Heart right ventricle (tissue), 16 donors: ENCODE measurements at regions of chr11 and their contacts with region 1.

Region 1: GRCh38 chr11:65418711-65419459 is 3.7 kb upstream of the NEAT1 start:
- DNase-seq: peak; percentile 97 to 99
- ATAC-seq: peak; percentile 44 to 66 (median 57)
- H3K4me3 ChIP-seq: peak overlapping the region; percentile 12 to 95 (median 74)
- H3K27ac ChIP-seq: peak overlapping the region; percentile 99 to 100 (median 100)
- H3K4me1 ChIP-seq: peaks cover 38 to 69% (median 66%) of the 10 kb centered on the region in 9 donors
- H3K27me3 ChIP-seq: no peaks in the 10 kb centered on the region
- CTCF ChIP-seq: no peak

Region 2: DNA sequence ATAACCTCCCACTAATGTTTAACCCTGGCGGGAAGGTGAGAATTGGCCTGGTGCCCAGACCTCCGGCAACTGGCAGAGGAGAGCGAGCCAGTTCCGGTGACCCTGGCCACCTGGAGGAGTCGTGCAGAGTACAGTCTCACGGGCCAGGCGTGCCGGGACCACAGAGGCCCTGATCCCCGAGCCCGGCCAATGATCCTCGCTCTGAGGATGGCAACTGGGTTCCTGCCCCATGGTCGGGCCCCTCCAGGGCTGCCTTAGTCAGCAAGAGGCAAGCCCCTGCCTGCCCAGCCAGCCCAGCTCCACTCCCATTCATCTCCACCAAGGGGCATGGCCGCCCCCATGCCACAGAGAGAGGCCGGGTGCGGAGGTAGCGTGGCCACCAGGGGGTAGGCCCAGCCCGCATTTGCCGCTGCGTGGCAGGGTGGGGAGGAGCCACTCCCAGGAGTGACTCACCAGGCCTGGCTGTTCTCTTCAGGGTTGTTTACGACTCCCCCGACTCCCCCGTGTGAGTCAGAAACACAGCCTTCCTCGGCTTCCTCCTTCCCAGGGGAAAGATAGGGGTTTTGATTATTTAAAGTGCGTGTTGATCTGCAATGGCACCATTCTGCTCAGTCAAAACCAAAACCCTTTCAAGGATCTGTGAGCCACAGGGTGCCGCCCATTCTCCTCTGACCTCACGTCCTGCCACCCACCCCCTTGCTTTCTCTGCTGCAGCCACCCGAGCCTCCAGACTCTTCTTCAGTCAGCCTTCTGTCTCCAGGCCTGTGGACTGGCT is 36.7 kb before region 1 on chr11 and contains the start of gene SLC25A45:
- intact Hi-C with region 1: loop called in 8 of 10 experiments (anchors 2 to 5 kb)
- DNase-seq: peak; percentile 90 to 93
- ATAC-seq: peak; percentile 89 to 96 (median 94)
- H3K4me3 ChIP-seq: peak within 1 kb of the TSS; percentile 27 to 74 (median 56)
- H3K27ac ChIP-seq: peak within 1 kb of the TSS; percentile 94 to 99 (median 98)
- H3K4me1 ChIP-seq: peaks cover 13 to 74% (median 47%) of the 10 kb centered on the region in 9 donors
- H3K27me3 ChIP-seq: no peaks in the 10 kb centered on the region
- CTCF ChIP-seq: peak; percentile 79 to 98 (median 86)
- total RNA-seq, gene SLC25A45: 4.6 to 12.2 (median 8.3) TPM

Region 3: GRCh38 chr11:65454696-65455456 is 36.0 kb after region 1 on chr11:
- intact Hi-C with region 1: loop called in 1 of 10 experiments (anchors 10 kb)
- DNase-seq: peak; percentile 89 to 93
- ATAC-seq: peak; percentile 91 to 98 (median 97)
- H3K4me3 ChIP-seq: peak overlapping the region; percentile 12 to 65 (median 50)
- H3K27ac ChIP-seq: peak overlapping the region; percentile 67 to 91 (median 85)
- H3K4me1 ChIP-seq: peaks cover 4 to 49% (median 24%) of the 10 kb centered on the region in 9 donors
- H3K27me3 ChIP-seq: no peaks in the 10 kb centered on the region
- CTCF ChIP-seq: peak in 3 of 9 donors; percentile 22 to 39 (median 27)

Region 4: DNA sequence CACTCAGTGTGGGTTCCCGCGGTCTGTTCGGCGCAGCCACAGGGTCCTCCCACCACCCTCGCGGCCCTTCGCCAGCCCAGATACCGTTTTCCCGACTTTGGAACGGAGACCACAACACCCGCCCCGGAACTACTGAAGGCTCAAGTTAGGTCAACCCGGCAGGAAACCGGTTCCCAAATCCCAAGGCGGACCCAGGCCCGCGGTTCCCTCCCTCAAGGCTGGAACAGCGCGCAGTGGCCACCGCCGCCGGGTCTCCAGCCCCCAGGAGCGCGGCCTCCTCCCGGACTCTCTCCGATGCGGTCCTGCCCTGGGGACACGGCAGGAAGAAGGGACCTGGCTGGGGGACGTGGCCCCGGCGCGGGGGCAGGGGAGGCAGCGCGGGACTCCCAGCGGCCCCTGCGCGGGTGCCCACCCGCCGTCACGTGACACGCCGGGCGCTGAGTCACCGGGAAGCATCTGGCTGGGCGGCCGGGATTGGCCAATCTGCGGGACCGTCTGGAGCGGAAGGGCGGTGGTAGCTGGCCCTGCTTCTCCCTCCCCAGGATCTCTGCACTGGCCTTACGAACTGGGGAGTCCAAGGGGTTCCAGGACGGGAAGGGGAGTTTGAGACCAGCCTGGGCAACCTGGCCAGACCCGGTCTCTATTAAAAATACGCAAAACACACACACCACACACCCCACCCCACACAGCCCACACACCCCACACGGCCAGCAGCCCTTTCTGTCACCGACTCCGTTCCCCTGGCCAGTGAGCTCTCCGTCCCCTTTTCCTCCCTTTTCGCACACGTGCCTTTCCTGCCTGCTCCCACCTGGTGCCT is 58.5 kb after region 1 on chr11:
- intact Hi-C with region 1: loop called in 3 of 10 experiments (anchors 2 to 10 kb)
- DNase-seq: peak; percentile 97
- ATAC-seq: peak; percentile 86 to 92 (median 92)
- H3K4me3 ChIP-seq: peak overlapping the region; percentile 54 to 92 (median 73)
- H3K27ac ChIP-seq: peak overlapping the region; percentile 95 to 100 (median 100)
- H3K4me1 ChIP-seq: peaks cover 16 to 72% (median 61%) of the 10 kb centered on the region in 9 donors
- H3K27me3 ChIP-seq: no peaks in the 10 kb centered on the region
- CTCF ChIP-seq: no peak

Region 5: GRCh38 chr11:65506770-65507505 is 88.1 kb after region 1 on chr11:
- intact Hi-C with region 1: loop called (anchors 1 to 5 kb)
- DNase-seq: no peak
- ATAC-seq: peak; percentile 15 to 53 (median 32)
- H3K4me3 ChIP-seq: peak overlapping the region in 8 of 10 donors; percentile 3 to 88 (median 83)
- H3K27ac ChIP-seq: peak overlapping the region; percentile 4 to 100 (median 99)
- H3K4me1 ChIP-seq: peaks cover 3 to 58% (median 43%) of the 10 kb centered on the region in 9 donors
- H3K27me3 ChIP-seq: no peaks in the 10 kb centered on the region
- CTCF ChIP-seq: no peak